H1 (cell line): ENCODE measurements at regions of chr11 and their contacts with region 1.

Region 1: DNA sequence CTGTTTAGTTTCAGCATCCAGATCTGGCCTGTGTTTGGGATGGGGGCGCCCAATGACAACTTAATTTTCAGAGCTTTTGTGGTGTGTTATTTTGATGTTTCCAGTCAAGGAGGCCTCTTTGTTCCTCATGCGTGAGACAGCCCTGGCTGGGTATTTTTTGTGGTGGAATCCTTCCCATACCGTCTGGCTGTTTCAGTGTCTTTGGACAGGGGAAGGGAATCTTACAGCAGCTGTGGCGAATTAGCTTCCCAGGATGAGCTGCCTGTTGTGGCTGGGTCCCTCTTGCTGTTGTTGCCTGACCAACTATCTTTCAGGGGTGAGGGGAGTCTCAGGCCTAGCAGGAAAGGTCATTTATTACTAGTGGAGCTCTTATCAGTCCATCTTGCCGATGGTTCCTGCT is 138.8 kb downstream of the ARHGAP20 start:
- DNase-seq: no peak
- H3K4me3 ChIP-seq: no peak overlapping the region
- H3K27ac ChIP-seq: no peak overlapping the region
- H3K4me1 ChIP-seq: no peaks in the 10 kb centered on the region
- H3K27me3 ChIP-seq: no peaks in the 10 kb centered on the region
- CTCF ChIP-seq: no peak
- EP300 ChIP-seq: no peak
- POLR2A ChIP-seq: no peak
- RAD21 ChIP-seq: peak; percentile 6 to 20; a peak in 1 of 4 replicates

Region 2: DNA sequence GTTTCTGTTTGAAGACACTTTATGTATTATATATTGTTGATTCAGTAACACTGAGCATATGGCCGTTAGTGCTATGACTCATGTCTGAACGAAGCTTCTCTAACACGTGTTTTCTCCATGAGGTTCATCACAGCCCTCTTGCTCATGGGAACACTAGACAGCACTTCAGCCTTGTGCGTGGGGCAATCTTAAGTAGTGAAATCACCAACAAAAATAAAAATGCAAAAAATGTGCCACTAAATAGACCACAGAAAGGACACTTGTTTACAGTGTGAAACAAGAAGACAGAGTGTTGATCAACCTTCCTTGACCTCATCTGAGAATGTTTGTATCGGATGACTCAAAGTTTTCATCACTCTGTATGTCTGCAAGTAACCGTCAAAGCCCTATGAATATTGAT is 49.2 kb before region 1 on chr11:
- CTCF ChIA-PET with region 1: no interaction called
- POLR2A ChIA-PET with region 1: no interaction called
- DNase-seq: no peak
- H3K4me3 ChIP-seq: no peak overlapping the region
- H3K27ac ChIP-seq: no peak overlapping the region
- H3K4me1 ChIP-seq: no peaks in the 10 kb centered on the region
- H3K27me3 ChIP-seq: no peaks in the 10 kb centered on the region
- CTCF ChIP-seq: no peak
- EP300 ChIP-seq: no peak
- POLR2A ChIP-seq: no peak
- RAD21 ChIP-seq: no peak

Region 3: GRCh38 chr11:110587972-110588371 is 14.6 kb after region 1 on chr11:
- CTCF ChIA-PET with region 1: interaction called, 10 read pairs
- POLR2A ChIA-PET with region 1: no interaction called
- DNase-seq: no peak
- H3K4me3 ChIP-seq: no peak overlapping the region
- H3K27ac ChIP-seq: no peak overlapping the region
- H3K4me1 ChIP-seq: no peaks in the 10 kb centered on the region
- H3K27me3 ChIP-seq: no peaks in the 10 kb centered on the region
- CTCF ChIP-seq: no peak
- EP300 ChIP-seq: no peak
- POLR2A ChIP-seq: no peak
- RAD21 ChIP-seq: no peak